Activated CD8-positive, alpha-beta memory T cell treated with anti-CD3 and anti-CD28 coated beads, Interleukin-2, amount 10 ng/mL, durations not matched to agents 7 days and 5 days (primary cell): ENCODE measurements at regions of chr14 and their contacts with region 1.

Region 1: GRCh38 chr14:103520657-103521437 is 1.8 kb downstream of the CKB start:
- DNase-seq: peak; percentile 72
- ATAC-seq: peak; percentile 68
- H3K4me3 Mint-ChIP-seq: peak overlapping the region; percentile 42
- H3K27ac Mint-ChIP-seq: no peak overlapping the region
- H3K4me1 Mint-ChIP-seq: peaks cover 9% of the 10 kb centered on the region
- H3K27me3 Mint-ChIP-seq: peaks cover 21% of the 10 kb centered on the region

Region 2: GRCh38 chr14:103442288-103442687 is 78.6 kb before region 1 on chr14:
- CTCF ChIA-PET with region 1: no interaction called
- DNase-seq: no peak
- ATAC-seq: no peak
- H3K4me3 Mint-ChIP-seq: no peak overlapping the region
- H3K27ac Mint-ChIP-seq: no peak overlapping the region
- H3K4me1 Mint-ChIP-seq: peaks cover 3% of the 10 kb centered on the region
- H3K27me3 Mint-ChIP-seq: no peaks in the 10 kb centered on the region

Region 3: DNA sequence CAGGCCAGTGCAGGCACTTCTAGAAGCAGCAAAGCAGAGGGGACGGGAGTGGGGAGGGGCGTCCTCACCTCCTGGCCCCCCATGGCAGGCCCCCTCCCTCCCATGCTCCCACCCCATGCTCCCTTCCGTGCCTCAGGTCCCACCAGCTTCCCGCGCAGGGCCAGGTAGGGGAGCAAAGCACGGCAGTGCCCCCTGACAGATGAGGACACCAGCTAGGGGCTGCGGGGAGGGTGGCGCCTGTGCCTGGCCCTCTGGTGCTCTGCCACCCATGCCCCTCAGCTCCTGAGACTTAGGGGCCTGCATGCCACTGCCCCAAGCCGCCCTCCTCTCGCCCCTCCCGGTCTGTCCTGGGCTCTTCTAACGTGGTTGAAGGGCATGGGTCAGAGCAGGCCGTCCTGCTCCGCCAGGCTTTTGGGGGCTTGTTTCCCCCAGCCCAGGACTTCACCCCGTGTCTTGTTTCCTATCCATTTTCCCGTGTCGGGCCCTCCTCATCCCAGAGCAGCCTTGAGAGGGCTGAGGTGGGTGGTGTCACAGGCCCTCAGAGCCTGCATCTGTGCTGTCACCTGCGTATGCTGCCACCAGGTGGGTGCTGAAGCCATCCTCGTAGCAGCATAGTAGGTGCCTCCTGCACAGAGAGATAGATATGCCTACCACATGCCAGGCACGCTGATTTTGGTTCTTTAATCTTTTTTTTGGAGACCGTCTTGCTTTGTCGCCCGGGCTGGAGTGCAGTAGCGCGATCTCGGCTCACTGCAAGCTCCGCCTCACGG is 18.4 kb after region 1 on chr14:
- CTCF ChIA-PET with region 1: interaction called, 79 read pairs
- DNase-seq: no peak
- ATAC-seq: no peak
- H3K4me3 Mint-ChIP-seq: no peak overlapping the region
- H3K27ac Mint-ChIP-seq: no peak overlapping the region
- H3K4me1 Mint-ChIP-seq: no peaks in the 10 kb centered on the region
- H3K27me3 Mint-ChIP-seq: peaks cover 2% of the 10 kb centered on the region

Region 4: DNA sequence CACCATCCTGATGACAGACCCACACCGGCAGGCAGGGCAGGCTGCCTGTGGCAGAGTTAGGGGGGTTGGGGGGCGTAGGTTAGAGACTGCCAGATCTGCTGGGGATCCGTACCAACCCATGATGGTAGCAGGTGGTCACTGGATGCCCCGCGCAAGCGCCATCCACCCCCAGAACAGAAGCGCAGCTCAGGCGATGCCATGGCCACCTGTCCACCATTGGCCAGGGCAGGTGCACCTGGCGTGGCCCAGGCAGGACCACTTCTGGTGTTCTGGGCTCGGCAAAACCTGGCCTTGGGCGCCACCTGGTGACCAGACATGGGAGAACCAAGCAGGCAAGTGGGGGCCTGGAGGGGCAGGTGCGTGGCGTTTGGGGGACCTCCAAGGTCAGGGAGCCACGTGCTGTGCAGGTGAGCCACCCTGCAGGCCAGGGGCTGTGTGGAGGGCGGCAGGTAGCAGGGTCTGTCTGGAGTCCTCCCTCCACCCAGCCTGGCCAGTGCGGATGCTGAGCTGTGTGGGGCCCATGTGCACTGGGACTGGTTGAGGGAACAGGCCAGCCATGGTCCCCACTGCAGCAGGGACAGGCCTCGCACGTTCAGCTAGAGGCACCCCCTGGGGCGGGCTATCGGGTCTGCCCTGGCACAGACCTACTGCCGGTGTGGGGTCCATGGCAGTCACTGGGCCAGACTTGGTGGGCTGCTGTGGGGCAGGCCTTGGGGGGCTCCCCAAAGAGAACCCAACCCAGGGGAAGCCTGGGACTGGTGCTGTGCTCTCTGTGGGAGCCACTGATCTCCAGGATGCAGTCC is 26.0 kb after region 1 on chr14:
- CTCF ChIA-PET with region 1: interaction called, 79 read pairs
- DNase-seq: peak; percentile 79
- ATAC-seq: peak; percentile 77
- H3K4me3 Mint-ChIP-seq: no peak overlapping the region
- H3K27ac Mint-ChIP-seq: no peak overlapping the region
- H3K4me1 Mint-ChIP-seq: peaks cover 3% of the 10 kb centered on the region
- H3K27me3 Mint-ChIP-seq: no peaks in the 10 kb centered on the region

Region 5: GRCh38 chr14:103552011-103552845 is 31.4 kb after region 1 on chr14:
- CTCF ChIA-PET with region 1: interaction called, 79 read pairs
- DNase-seq: no peak
- ATAC-seq: no peak
- H3K4me3 Mint-ChIP-seq: no peak overlapping the region
- H3K27ac Mint-ChIP-seq: no peak overlapping the region
- H3K4me1 Mint-ChIP-seq: peaks cover 5% of the 10 kb centered on the region
- H3K27me3 Mint-ChIP-seq: no peaks in the 10 kb centered on the region